ENCODE measurements at regions of chr2 and their contacts with region 1.

Region 1: DNA sequence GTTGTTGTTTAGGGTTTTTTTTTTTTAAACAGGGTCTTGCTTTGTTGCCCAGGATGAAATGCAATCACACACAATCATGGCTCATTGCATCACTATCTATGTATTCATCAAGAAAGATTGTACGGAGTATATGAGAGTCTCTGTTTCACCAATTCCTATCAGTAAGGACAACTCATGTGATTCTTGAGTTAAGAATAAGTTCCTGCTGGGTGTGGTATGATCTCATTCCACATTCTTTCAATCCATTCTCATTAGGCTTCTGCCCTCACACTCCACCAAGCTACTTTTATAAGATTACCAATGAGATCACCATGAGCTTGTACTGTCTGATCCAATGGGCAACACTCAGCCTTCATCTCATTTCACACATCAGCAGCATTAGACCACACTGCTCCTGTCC is 9.1 kb upstream of the AP1S3 start:
- DNase-seq: no peak
- H3K4me3 ChIP-seq: no peak overlapping the region
- H3K27ac ChIP-seq: no peak overlapping the region
- H3K4me1 ChIP-seq: no peaks in the 10 kb centered on the region
- H3K27me3 ChIP-seq: no peaks in the 10 kb centered on the region
- CTCF ChIP-seq: no peak
- EP300 ChIP-seq: no peak
- POLR2A ChIP-seq: no peak

Region 2: DNA sequence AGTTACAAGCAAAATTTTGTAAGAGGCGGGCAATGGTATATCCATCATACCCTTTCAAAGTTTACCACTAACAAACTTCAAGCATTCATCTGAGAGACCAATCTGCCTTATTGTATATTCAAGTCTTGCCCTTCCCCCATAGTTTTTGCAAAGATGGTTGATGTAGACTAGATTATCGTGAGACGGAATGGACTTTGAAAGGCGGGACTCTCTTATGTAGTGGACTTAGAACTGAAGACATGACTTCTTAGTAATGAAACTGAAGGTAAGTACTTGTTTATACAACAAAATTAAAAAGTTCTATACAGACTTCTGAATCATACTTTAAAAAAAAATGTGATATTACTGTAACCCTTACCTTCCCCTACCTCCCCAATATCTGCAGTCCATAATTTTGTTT is 19.5 kb before region 1 on chr2:
- intact Hi-C with region 1: loop called in 1 of 4 experiments (anchors 2 kb)
- DNase-seq: no peak
- H3K4me3 ChIP-seq: no peak overlapping the region
- H3K27ac ChIP-seq: no peak overlapping the region
- H3K4me1 ChIP-seq: no peaks in the 10 kb centered on the region
- H3K27me3 ChIP-seq: no peaks in the 10 kb centered on the region
- CTCF ChIP-seq: no peak
- EP300 ChIP-seq: no peak
- POLR2A ChIP-seq: no peak

Measured in ovary (tissue), 10 donors.